ENCODE measurements at regions of chr5 and their contacts with region 1.

Region 1: GRCh38 chr5:159915904-159916840 is at the start of gene ADRA1B:
- DNase-seq: peak in 12 of 14 experiments; percentile 6 to 64 (median 23)
- ATAC-seq: peak; percentile 67
- H3K4me3 ChIP-seq: no peak within 1 kb of the TSS
- H3K4me3 Mint-ChIP-seq: peak within 1 kb of the TSS; percentile 32
- H3K27ac ChIP-seq: no peak within 1 kb of the TSS
- H3K27ac Mint-ChIP-seq: no peak within 1 kb of the TSS
- H3K4me1 ChIP-seq: peaks cover 9% of the 10 kb centered on the region
- H3K4me1 Mint-ChIP-seq: peaks cover 10% of the 10 kb centered on the region
- H3K27me3 ChIP-seq: peaks cover 24 to 51% of the 10 kb centered on the region in 2 experiments
- H3K27me3 Mint-ChIP-seq: peaks cover 67% of the 10 kb centered on the region
- CTCF ChIP-seq: no peak
- total RNA-seq, gene ADRA1B: not detected

Region 2: GRCh38 chr5:159286420-159287035 is 629.6 kb before region 1 on chr5:
- CTCF ChIA-PET with region 1: no interaction called
- POLR2A ChIA-PET with region 1: no interaction called
- intact Hi-C with region 1: loop called in 1 of 2 experiments (anchors 2 kb)
- DNase-seq: peak in 4 of 14 experiments; percentile 10 to 66 (median 52)
- ATAC-seq: peak; percentile 62
- H3K4me3 ChIP-seq: no peak overlapping the region
- H3K4me3 Mint-ChIP-seq: no peak overlapping the region
- H3K27ac ChIP-seq: no peak overlapping the region
- H3K27ac Mint-ChIP-seq: no peak overlapping the region
- H3K4me1 ChIP-seq: no peaks in the 10 kb centered on the region
- H3K4me1 Mint-ChIP-seq: no peaks in the 10 kb centered on the region
- H3K27me3 ChIP-seq: no peaks in the 10 kb centered on the region
- H3K27me3 Mint-ChIP-seq: no peaks in the 10 kb centered on the region
- CTCF ChIP-seq: peak; percentile 68

Region 3: DNA sequence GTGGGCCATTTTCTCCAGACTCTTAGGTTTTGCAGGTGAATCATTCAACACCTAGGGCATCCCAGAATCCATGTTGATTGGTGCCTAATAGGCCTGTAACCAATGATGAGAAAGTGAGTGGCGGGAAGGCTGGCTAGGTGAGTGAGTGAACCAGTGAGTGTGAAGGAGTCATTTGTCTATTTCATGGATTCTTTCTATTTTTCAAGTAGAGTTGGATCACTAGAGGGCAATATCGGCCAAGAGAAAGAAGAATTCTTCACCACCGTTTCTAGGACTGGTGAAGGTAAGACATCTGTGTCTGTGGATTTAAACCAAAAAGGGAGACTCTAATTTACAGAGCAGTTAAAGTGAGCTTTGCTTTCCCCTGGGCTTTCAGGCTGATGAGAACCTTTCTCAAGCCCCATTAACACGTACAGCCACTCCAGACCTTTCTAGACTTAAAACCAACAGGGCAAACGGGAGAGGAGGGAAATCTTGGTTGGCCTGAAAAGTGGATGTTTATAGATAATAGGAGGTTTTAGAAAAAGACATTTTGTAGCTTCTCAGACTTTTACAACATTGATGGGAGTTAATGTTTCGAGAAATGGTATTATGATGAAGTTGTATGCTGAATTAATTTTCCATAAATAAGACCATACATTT is 471.6 kb before region 1 on chr5:
- CTCF ChIA-PET with region 1: no interaction called
- POLR2A ChIA-PET with region 1: no interaction called
- intact Hi-C with region 1: loop called in 1 of 2 experiments (anchors 5 kb)
- DNase-seq: peak in 3 of 14 experiments; percentile 53 to 65 (median 55)
- ATAC-seq: no peak
- H3K4me3 ChIP-seq: no peak overlapping the region
- H3K4me3 Mint-ChIP-seq: no peak overlapping the region
- H3K27ac ChIP-seq: no peak overlapping the region
- H3K27ac Mint-ChIP-seq: no peak overlapping the region
- H3K4me1 ChIP-seq: no peaks in the 10 kb centered on the region
- H3K4me1 Mint-ChIP-seq: no peaks in the 10 kb centered on the region
- H3K27me3 ChIP-seq: no peaks in the 10 kb centered on the region
- H3K27me3 Mint-ChIP-seq: no peaks in the 10 kb centered on the region
- CTCF ChIP-seq: peak; percentile 32

Measured in CD4-positive, alpha-beta T cell (primary cell).